ENCODE measurements at regions of chr4 and their contacts with region 1.

Region 1: GRCh38 chr4:122577808-122578781 is 42.8 kb downstream of the IL21 start:
- DNase-seq: peak; percentile 80
- ATAC-seq: peak; percentile 85
- H3K4me3 Mint-ChIP-seq: peak overlapping the region; percentile 60
- H3K27ac Mint-ChIP-seq: peak overlapping the region; percentile 81
- H3K4me1 Mint-ChIP-seq: peaks cover 48% of the 10 kb centered on the region
- H3K27me3 Mint-ChIP-seq: no peaks in the 10 kb centered on the region

Region 2: GRCh38 chr4:121900132-121900983 is 677.7 kb before region 1 on chr4:
- CTCF ChIA-PET with region 1: interaction called, 54 read pairs
- POLR2A ChIA-PET with region 1: no interaction called
- DNase-seq: peak; percentile 67
- ATAC-seq: peak; percentile 82
- H3K4me3 Mint-ChIP-seq: no peak overlapping the region
- H3K27ac Mint-ChIP-seq: no peak overlapping the region
- H3K4me1 Mint-ChIP-seq: peaks cover 6% of the 10 kb centered on the region
- H3K27me3 Mint-ChIP-seq: peaks cover 3% of the 10 kb centered on the region

Region 3: GRCh38 chr4:122309988-122310626 is 268.0 kb before region 1 on chr4:
- CTCF ChIA-PET with region 1: interaction called, 13 read pairs
- POLR2A ChIA-PET with region 1: no interaction called
- DNase-seq: no peak
- ATAC-seq: no peak
- H3K4me3 Mint-ChIP-seq: no peak overlapping the region
- H3K27ac Mint-ChIP-seq: no peak overlapping the region
- H3K4me1 Mint-ChIP-seq: no peaks in the 10 kb centered on the region
- H3K27me3 Mint-ChIP-seq: no peaks in the 10 kb centered on the region

Region 4: GRCh38 chr4:122542411-122543236 is 35.5 kb before region 1 on chr4:
- CTCF ChIA-PET with region 1: interaction called, 10 read pairs
- POLR2A ChIA-PET with region 1: no interaction called
- DNase-seq: no peak
- ATAC-seq: peak; percentile 24
- H3K4me3 Mint-ChIP-seq: no peak overlapping the region
- H3K27ac Mint-ChIP-seq: peak overlapping the region; percentile 36
- H3K4me1 Mint-ChIP-seq: peaks cover 38% of the 10 kb centered on the region
- H3K27me3 Mint-ChIP-seq: no peaks in the 10 kb centered on the region

Region 5: GRCh38 chr4:122658818-122659295 is 80.8 kb after region 1 on chr4:
- CTCF ChIA-PET with region 1: no interaction called
- POLR2A ChIA-PET with region 1: no interaction called
- DNase-seq: no peak
- ATAC-seq: no peak
- H3K4me3 Mint-ChIP-seq: no peak overlapping the region
- H3K27ac Mint-ChIP-seq: no peak overlapping the region
- H3K4me1 Mint-ChIP-seq: peaks cover 11% of the 10 kb centered on the region
- H3K27me3 Mint-ChIP-seq: no peaks in the 10 kb centered on the region

Region 6: GRCh38 chr4:122716825-122717448 is 138.8 kb after region 1 on chr4:
- CTCF ChIA-PET with region 1: interaction called, 21 read pairs
- POLR2A ChIA-PET with region 1: no interaction called
- DNase-seq: peak; percentile 79
- ATAC-seq: peak; percentile 96
- H3K4me3 Mint-ChIP-seq: no peak overlapping the region
- H3K27ac Mint-ChIP-seq: no peak overlapping the region
- H3K4me1 Mint-ChIP-seq: peaks cover 18% of the 10 kb centered on the region
- H3K27me3 Mint-ChIP-seq: peaks cover 3% of the 10 kb centered on the region

Region 7: GRCh38 chr4:122930862-122931261 is 352.8 kb after region 1 on chr4:
- CTCF ChIA-PET with region 1: interaction called, 23 read pairs
- POLR2A ChIA-PET with region 1: no interaction called
- DNase-seq: no peak
- ATAC-seq: no peak
- H3K4me3 Mint-ChIP-seq: no peak overlapping the region
- H3K27ac Mint-ChIP-seq: no peak overlapping the region
- H3K4me1 Mint-ChIP-seq: peaks cover 26% of the 10 kb centered on the region
- H3K27me3 Mint-ChIP-seq: no peaks in the 10 kb centered on the region